Activated T-helper 2 cell treated with anti-CD3 and anti-CD28 coated beads, Interferon-gamma antibody, Interleukin-2, Interleukin-4, amounts not matched to agents 10 μg/mL and 5 μg/mL and 100 μg/mL, durations not matched to agents 14 hours and 24 hours and 36 hours (primary cell): ENCODE measurements at regions of chr5 and their contacts with region 1.

Region 1: DNA sequence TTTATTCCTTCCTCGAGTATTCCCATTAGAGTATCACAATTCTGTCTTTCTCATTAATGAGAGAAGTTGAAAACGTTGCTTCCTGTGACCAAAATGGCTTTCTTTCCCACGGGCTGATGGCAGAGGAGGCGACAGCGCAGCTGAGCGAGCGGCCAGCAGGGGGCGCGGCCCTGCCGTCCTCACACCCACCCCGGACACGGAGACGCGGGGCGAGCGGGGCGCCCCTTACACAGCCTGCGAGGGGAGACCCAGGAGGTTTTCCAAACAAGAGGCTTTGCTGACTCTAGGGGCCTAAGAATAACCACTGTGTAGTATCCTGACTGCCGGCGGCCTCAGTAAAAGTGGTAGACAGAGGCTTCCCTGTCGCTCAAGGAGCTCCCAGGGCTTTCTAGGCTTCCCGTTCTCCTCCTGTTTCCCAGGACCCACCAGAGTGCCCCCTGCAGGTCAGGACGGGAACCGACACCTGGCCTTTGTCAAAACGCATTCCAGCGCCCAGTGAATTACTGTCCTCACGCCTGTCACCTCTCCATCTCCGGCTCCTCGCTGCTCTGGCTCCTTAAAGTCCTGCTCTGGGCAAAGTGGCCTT is 27.3 kb upstream of the FGF1 start:
- DNase-seq: peak; percentile 82
- H3K4me3 Mint-ChIP-seq: peak overlapping the region; percentile 74
- H3K27ac Mint-ChIP-seq: no peak overlapping the region
- H3K4me1 Mint-ChIP-seq: peaks cover 6% of the 10 kb centered on the region
- H3K27me3 Mint-ChIP-seq: peaks cover 17% of the 10 kb centered on the region

Region 2: DNA sequence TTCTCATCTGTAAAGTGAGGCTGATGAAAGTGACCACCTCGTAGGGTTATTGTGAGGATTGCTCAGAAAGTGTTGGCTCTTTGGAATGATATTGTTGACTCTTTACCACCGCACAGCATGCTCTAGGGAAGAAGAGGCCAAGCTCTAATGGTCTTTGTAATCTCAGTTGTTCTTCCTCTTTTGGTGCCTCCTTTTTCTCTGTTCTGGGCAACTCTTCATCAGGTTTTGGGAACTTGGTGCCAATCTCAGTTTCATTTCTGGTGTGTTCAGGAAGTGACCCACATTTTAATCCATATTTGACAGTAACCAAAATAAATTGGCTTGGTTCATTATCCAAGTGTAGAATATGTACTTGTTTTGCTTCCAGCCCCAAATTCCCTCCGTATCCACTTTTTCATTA is 82.0 kb after region 1 on chr5:
- intact Hi-C with region 1: no loop called
- DNase-seq: no peak
- H3K4me3 Mint-ChIP-seq: no peak overlapping the region
- H3K27ac Mint-ChIP-seq: no peak overlapping the region
- H3K4me1 Mint-ChIP-seq: peaks cover 46% of the 10 kb centered on the region
- H3K27me3 Mint-ChIP-seq: no peaks in the 10 kb centered on the region

Region 3: GRCh38 chr5:142881076-142881783 is 168.0 kb after region 1 on chr5:
- intact Hi-C with region 1: loop called (anchors 1 kb)
- DNase-seq: no peak
- H3K4me3 Mint-ChIP-seq: no peak overlapping the region
- H3K27ac Mint-ChIP-seq: no peak overlapping the region
- H3K4me1 Mint-ChIP-seq: peaks cover 13% of the 10 kb centered on the region
- H3K27me3 Mint-ChIP-seq: no peaks in the 10 kb centered on the region

Region 4: GRCh38 chr5:142888469-142889085 is 175.4 kb after region 1 on chr5:
- intact Hi-C with region 1: loop called (anchors 1 kb)
- DNase-seq: no peak
- H3K4me3 Mint-ChIP-seq: no peak overlapping the region
- H3K27ac Mint-ChIP-seq: no peak overlapping the region
- H3K4me1 Mint-ChIP-seq: peaks cover 15% of the 10 kb centered on the region
- H3K27me3 Mint-ChIP-seq: no peaks in the 10 kb centered on the region